ENCODE measurements at regions of chr12 and their contacts with region 1.

Region 1: GRCh38 chr12:124036674-124037109 is 63.7 kb downstream of the ZNF664 start:
- DNase-seq: no peak
- H3K4me3 ChIP-seq: no peak overlapping the region
- H3K27ac ChIP-seq: no peak overlapping the region
- H3K4me1 ChIP-seq: peaks cover 0 to 6% (median 0%) of the 10 kb centered on the region in 4 donors
- H3K27me3 ChIP-seq: no peaks in the 10 kb centered on the region
- CTCF ChIP-seq: peak; percentile 39 to 90 (median 89)
- EP300 ChIP-seq: no peak
- POLR2A ChIP-seq: no peak

Region 2: GRCh38 chr12:123794027-123794426 is 242.7 kb before region 1 on chr12:
- intact Hi-C with region 1: no loop called
- DNase-seq: no peak
- H3K4me3 ChIP-seq: no peak overlapping the region
- H3K27ac ChIP-seq: no peak overlapping the region
- H3K4me1 ChIP-seq: no peaks in the 10 kb centered on the region
- H3K27me3 ChIP-seq: no peaks in the 10 kb centered on the region
- CTCF ChIP-seq: no peak
- EP300 ChIP-seq: no peak
- POLR2A ChIP-seq: no peak

Region 3: DNA sequence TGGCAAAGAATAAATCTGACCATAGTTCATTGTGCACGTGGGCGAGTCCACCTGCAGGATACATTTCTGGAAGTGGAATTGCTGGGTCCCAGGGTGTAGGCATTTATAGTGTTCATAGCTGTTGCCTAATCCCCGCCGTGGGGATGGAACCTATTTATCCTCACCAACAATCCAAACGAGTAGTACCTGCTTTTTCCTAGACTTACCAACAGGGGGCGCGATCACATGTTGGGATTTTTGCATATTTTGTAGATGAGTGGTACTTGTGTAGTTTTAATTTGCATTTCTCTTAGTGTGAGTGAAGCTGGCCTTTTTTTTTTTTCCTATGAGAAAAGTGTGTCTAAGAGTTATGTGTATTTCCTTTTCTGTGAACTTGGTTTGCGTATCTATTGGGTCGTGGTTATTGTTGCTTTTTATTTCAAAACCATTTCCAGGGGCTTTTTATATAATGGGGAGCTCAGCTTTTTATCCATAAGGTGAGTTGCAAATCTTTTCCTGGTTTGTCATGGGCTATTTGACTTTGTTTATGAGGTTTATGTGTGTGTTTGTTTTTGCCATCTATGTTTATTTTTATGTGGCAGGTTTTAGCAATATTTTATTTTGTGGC is 131.3 kb before region 1 on chr12:
- intact Hi-C with region 1: loop called (anchors 5 kb)
- DNase-seq: no peak
- H3K4me3 ChIP-seq: no peak overlapping the region
- H3K27ac ChIP-seq: no peak overlapping the region
- H3K4me1 ChIP-seq: no peaks in the 10 kb centered on the region
- H3K27me3 ChIP-seq: peaks cover 0 to 16% (median 2%) of the 10 kb centered on the region in 3 donors
- CTCF ChIP-seq: peak; percentile 10 to 70 (median 63)
- EP300 ChIP-seq: no peak
- POLR2A ChIP-seq: no peak

Region 4: GRCh38 chr12:124321040-124321481 is 284.4 kb after region 1 on chr12:
- intact Hi-C with region 1: loop called (anchors 2 kb)
- DNase-seq: no peak
- H3K4me3 ChIP-seq: no peak overlapping the region
- H3K27ac ChIP-seq: peak overlapping the region in 2 of 4 donors; percentile 0 to 22
- H3K4me1 ChIP-seq: peaks cover 0 to 11% (median 5%) of the 10 kb centered on the region in 4 donors
- H3K27me3 ChIP-seq: no peaks in the 10 kb centered on the region
- CTCF ChIP-seq: peak; percentile 64 to 93 (median 89)
- EP300 ChIP-seq: no peak
- POLR2A ChIP-seq: no peak

Region 5: DNA sequence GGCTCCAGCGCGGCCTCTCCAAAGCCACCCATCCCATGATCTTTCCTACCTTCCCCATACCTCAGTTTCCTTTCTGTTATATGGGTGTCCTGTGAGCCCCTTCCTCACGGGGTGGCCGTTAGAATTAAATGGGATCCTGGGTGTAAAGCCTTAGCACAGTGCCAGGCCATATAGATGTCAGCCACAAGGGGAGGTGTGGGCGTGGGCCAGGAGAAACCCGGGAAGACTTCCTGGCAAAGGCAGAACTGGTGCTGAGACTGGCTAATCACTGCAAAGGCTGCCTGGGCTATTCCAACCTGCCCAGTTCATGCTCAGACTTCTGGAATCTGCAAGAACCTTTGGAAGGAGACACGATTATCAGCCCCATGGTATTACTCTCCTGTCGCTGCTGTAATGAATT is 541.8 kb after region 1 on chr12:
- intact Hi-C with region 1: loop called (anchors 10 kb)
- DNase-seq: no peak
- H3K4me3 ChIP-seq: no peak overlapping the region
- H3K27ac ChIP-seq: no peak overlapping the region
- H3K4me1 ChIP-seq: peaks cover 0 to 8% (median 5%) of the 10 kb centered on the region in 4 donors
- H3K27me3 ChIP-seq: no peaks in the 10 kb centered on the region
- CTCF ChIP-seq: no peak
- EP300 ChIP-seq: no peak
- POLR2A ChIP-seq: no peak